ENCODE measurements at regions of chrX and their contacts with region 1.

Region 1: GRCh38 chrX:65985922-65986588 is 53.8 kb downstream of the VSIG4 start:
- DNase-seq: peak; percentile 18
- ATAC-seq: peak; percentile 84
- H3K4me3 ChIP-seq: no peak overlapping the region
- H3K27ac ChIP-seq: no peak overlapping the region
- H3K4me1 ChIP-seq: no peaks in the 10 kb centered on the region
- H3K27me3 ChIP-seq: no peaks in the 10 kb centered on the region
- CTCF ChIP-seq: peak; percentile 53
- EP300 ChIP-seq: no peak
- POLR2A ChIP-seq: no peak
- RAD21 ChIP-seq: no peak

Region 2: GRCh38 chrX:65581661-65582339 is 404.3 kb before region 1 on chrX:
- CTCF ChIA-PET with region 1: interaction called, 9 read pairs
- POLR2A ChIA-PET with region 1: no interaction called
- in situ Hi-C with region 1: loop called (anchors 10 kb)
- intact Hi-C with region 1: loop called (anchors 2 kb)
- DNase-seq: peak; percentile 26
- ATAC-seq: peak; percentile 90
- H3K4me3 ChIP-seq: no peak overlapping the region
- H3K27ac ChIP-seq: no peak overlapping the region
- H3K4me1 ChIP-seq: no peaks in the 10 kb centered on the region
- H3K27me3 ChIP-seq: no peaks in the 10 kb centered on the region
- CTCF ChIP-seq: peak; percentile 76
- EP300 ChIP-seq: no peak
- POLR2A ChIP-seq: no peak
- RAD21 ChIP-seq: peak; percentile 26; the same call in 1 of the 2 replicates

Region 3: GRCh38 chrX:65595460-65595876 is 390.6 kb before region 1 on chrX:
- CTCF ChIA-PET with region 1: interaction called, 3 read pairs
- POLR2A ChIA-PET with region 1: no interaction called
- in situ Hi-C with region 1: no loop called
- intact Hi-C with region 1: loop called (anchors 5 kb)
- DNase-seq: peak; percentile 66
- ATAC-seq: peak; percentile 91
- H3K4me3 ChIP-seq: no peak overlapping the region
- H3K27ac ChIP-seq: no peak overlapping the region
- H3K4me1 ChIP-seq: no peaks in the 10 kb centered on the region
- H3K27me3 ChIP-seq: no peaks in the 10 kb centered on the region
- CTCF ChIP-seq: peak; percentile 84
- EP300 ChIP-seq: no peak
- POLR2A ChIP-seq: no peak
- RAD21 ChIP-seq: 0 out of 2 replicates have a peak, but pooled peaks have one; percentile 33

Region 4: DNA sequence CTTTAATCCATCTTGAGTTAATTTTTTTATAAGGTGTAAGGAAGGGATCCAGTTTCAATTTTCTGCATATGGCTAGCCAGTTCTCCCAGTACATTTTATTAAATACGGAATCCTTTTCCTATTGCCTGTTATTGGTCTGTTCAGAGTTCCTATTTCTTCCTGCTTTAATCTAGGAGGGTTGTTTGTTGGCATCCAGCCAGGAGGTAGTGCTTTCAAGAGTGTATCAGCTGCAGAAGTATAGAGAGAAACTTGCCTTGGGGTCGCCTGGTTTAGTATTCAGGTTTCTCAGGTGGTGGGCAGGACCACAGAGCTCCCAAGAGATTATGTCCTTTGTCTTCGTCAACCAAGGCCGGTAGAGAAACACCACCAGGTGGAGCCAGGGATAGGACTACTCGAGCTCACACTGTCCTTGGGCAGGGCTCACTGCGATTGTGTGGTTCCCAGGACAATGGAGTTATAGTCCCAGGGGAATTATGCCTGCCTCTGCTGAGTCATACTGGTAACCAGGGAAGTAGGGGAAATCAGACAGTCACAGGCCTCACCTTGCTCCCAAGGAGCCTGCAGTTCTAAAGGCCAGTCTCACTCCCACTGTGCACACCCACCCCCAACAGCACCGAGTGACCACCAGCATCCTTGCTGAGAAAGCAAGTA is 114.3 kb before region 1 on chrX:
- CTCF ChIA-PET with region 1: interaction called, 5 read pairs
- POLR2A ChIA-PET with region 1: no interaction called
- in situ Hi-C with region 1: no loop called
- intact Hi-C with region 1: loop called (anchors 2 kb)
- DNase-seq: peak; percentile 41
- ATAC-seq: peak; percentile 88
- H3K4me3 ChIP-seq: no peak overlapping the region
- H3K27ac ChIP-seq: no peak overlapping the region
- H3K4me1 ChIP-seq: no peaks in the 10 kb centered on the region
- H3K27me3 ChIP-seq: no peaks in the 10 kb centered on the region
- CTCF ChIP-seq: peak; percentile 44
- EP300 ChIP-seq: no peak
- POLR2A ChIP-seq: no peak
- RAD21 ChIP-seq: no peak

Region 5: GRCh38 chrX:66098162-66098561 is 112.1 kb after region 1 on chrX:
- CTCF ChIA-PET with region 1: no interaction called
- POLR2A ChIA-PET with region 1: no interaction called
- in situ Hi-C with region 1: no loop called
- intact Hi-C with region 1: no loop called
- DNase-seq: no peak
- ATAC-seq: no peak
- H3K4me3 ChIP-seq: no peak overlapping the region
- H3K27ac ChIP-seq: no peak overlapping the region
- H3K4me1 ChIP-seq: no peaks in the 10 kb centered on the region
- H3K27me3 ChIP-seq: no peaks in the 10 kb centered on the region
- CTCF ChIP-seq: no peak
- EP300 ChIP-seq: no peak
- POLR2A ChIP-seq: no peak
- RAD21 ChIP-seq: no peak

Region 6: DNA sequence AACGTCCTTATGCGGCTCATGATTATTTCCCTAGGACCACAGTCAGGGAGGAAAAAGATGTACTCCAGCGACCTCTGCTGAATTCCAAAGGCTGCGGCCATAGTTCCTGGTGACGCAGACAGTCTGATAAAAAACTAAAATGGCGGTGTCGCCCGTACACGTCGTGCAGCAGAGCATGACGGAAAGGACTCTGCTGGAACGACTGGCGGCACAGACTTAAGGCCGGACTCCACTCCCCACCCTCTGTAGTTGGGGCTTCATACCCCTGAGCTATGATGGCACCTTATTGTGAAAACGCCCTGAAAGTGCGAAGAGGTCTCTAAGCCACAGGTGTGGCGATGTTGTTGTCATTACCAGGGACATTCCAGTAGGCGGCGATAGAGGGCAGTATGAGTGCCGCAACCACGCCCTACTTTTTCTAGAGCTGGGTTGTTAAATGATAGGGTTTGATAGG is 742.8 kb after region 1 on chrX:
- CTCF ChIA-PET with region 1: no interaction called
- POLR2A ChIA-PET with region 1: no interaction called
- in situ Hi-C with region 1: no loop called
- intact Hi-C with region 1: loop called (anchors 5 kb)
- DNase-seq: peak; percentile 6
- ATAC-seq: peak; percentile 51; the same call in 2 of the 3 replicates
- H3K4me3 ChIP-seq: no peak overlapping the region
- H3K27ac ChIP-seq: no peak overlapping the region
- H3K4me1 ChIP-seq: no peaks in the 10 kb centered on the region
- H3K27me3 ChIP-seq: no peaks in the 10 kb centered on the region
- CTCF ChIP-seq: peak; percentile 60
- EP300 ChIP-seq: no peak
- POLR2A ChIP-seq: no peak
- RAD21 ChIP-seq: no peak